ENCODE measurements at regions of chr19 and their contacts with region 1.

Region 1: GRCh38 chr19:1455336-1456120 is 5.6 kb downstream of the APC2 start:
- DNase-seq: peak; percentile 97
- ATAC-seq: peak; percentile 87
- H3K4me3 ChIP-seq: peak overlapping the region; percentile 40 to 62
- H3K27ac ChIP-seq: peak overlapping the region; percentile 65
- H3K4me1 ChIP-seq: peaks cover 23 to 47% of the 10 kb centered on the region in 2 experiments
- H3K27me3 ChIP-seq: no peaks in the 10 kb centered on the region; the same call in 1 of the 2 replicates
- CTCF ChIP-seq: no peak
- POLR2A ChIP-seq: peak; percentile 22
- RAD21 ChIP-seq: no peak

Region 2: DNA sequence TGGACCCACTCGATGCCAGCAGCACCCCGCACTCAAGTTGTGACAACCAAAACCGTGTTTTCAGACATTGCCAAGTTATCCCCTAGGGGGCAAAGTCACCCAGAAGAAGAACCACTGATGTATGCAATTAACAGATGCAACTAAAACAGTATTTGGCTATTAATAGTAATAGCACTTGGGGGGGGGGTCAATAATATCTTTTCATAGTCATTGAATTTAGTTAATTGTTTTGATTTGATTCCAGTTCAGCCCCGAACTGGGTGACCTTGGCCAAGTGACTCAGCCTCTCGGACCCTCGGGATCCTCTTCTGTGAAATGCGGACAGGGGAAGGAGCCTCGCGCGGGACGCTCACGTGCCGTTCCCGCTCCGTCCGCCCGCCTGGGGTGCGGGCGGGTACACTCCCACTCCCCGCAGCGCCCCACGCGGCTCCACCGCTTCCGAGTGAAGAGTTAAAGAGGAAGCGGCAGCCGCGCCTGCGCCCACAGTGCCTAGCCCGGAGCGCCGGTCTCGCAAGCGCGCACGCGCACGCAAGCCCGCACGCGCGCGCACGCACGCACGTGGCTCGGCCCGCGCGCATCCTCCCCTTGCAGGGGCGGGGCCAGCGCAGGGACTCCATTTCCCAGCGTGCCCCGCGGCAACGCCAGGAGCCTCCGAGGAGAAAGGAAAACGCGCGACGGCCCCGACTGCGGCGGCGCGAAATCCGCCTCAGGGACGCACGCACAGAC is 48.6 kb before region 1 on chr19:
- CTCF ChIA-PET with region 1: no interaction called
- POLR2A ChIA-PET with region 1: no interaction called
- RAD21 ChIA-PET with region 1: no interaction called
- intact Hi-C with region 1: no loop called
- DNase-seq: peak; percentile 96
- ATAC-seq: peak; percentile 84
- H3K4me3 ChIP-seq: peak overlapping the region; percentile 54 to 61
- H3K27ac ChIP-seq: peak overlapping the region; percentile 98
- H3K4me1 ChIP-seq: peaks cover 26 to 54% of the 10 kb centered on the region in 2 experiments
- H3K27me3 ChIP-seq: no peaks in the 10 kb centered on the region
- CTCF ChIP-seq: peak in 2 of 3 experiments; percentile 55 to 66; a peak in 5 of 6 replicates
- POLR2A ChIP-seq: peak; percentile 75
- RAD21 ChIP-seq: no peak

Region 3: GRCh38 chr19:1445185-1445931 is 10.2 kb before region 1 on chr19:
- CTCF ChIA-PET with region 1: interaction called, 49 read pairs
- POLR2A ChIA-PET with region 1: interaction called, 28 read pairs
- RAD21 ChIA-PET with region 1: interaction called in 1 of 2 experiments, 4 read pairs
- intact Hi-C with region 1: no loop called
- DNase-seq: no peak
- ATAC-seq: peak; percentile 75
- H3K4me3 ChIP-seq: peak overlapping the region; percentile 48 to 62
- H3K27ac ChIP-seq: peak overlapping the region; percentile 82
- H3K4me1 ChIP-seq: peaks cover 43 to 66% of the 10 kb centered on the region in 2 experiments
- H3K27me3 ChIP-seq: no peaks in the 10 kb centered on the region; the same call in 1 of the 2 replicates
- CTCF ChIP-seq: peak; percentile 77 to 88 (median 77)
- POLR2A ChIP-seq: no peak
- RAD21 ChIP-seq: peak; percentile 59

Region 4: DNA sequence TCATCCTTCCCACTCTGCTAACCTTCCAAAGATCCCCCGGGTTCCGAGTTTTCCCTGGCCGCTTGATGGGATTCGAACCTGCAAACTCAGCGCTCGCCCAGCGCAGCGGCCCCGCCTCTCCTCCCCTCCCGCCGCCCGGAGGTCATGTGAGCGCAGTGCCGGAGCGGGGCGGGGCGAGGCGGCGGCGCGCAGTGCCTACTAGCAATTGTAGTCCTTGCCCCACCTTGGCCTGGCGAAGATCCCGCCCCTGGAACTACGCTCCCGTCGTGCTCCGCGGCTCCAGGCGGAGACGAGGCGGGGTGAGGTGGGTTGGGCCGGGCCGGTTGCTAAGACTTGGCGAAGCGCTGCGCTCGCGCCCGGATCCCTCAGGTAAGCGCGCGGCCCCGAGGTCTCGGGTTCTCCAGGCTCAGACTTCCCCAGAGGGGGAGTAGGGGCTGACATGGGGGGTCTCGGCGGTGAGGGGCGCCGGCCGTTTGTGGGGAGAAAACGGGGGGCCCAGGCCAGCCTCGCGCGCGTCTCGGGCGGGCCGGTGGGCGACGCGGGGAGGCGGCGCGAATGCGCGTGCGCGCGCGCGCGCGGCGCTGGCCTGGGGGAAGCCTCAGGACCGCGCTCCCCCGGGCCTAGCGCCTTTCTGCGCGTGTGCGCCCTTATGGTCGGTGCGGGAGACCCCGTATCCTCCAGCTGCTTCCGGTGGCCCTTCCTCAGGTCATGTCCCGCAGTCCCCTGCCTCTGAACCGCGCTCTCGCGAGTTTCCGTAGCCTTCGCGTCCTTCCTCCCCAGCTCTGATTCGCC is 449.7 kb after region 1 on chr19 and contains the starts of genes ADAT3 and SCAMP4:
- CTCF ChIA-PET with region 1: no interaction called
- POLR2A ChIA-PET with region 1: no interaction called
- RAD21 ChIA-PET with region 1: no interaction called
- intact Hi-C with region 1: no loop called
- DNase-seq: peak; percentile 98
- ATAC-seq: peak; percentile 95
- H3K4me3 ChIP-seq: peak within 1 kb of the TSS; percentile 55 to 95
- H3K27ac ChIP-seq: peak within 1 kb of the TSS; percentile 85
- H3K4me1 ChIP-seq: peaks cover 9 to 26% of the 10 kb centered on the region in 2 experiments; a peak in 3 of 4 replicates
- H3K27me3 ChIP-seq: no peaks in the 10 kb centered on the region
- CTCF ChIP-seq: no peak
- POLR2A ChIP-seq: peak; percentile 60
- RAD21 ChIP-seq: no peak
- total RNA-seq, gene ADAT3: 15.9 TPM
- total RNA-seq, gene SCAMP4: 63.3 TPM